ENCODE measurements at regions of chr4 and their contacts with region 1.

Region 1: GRCh38 chr4:118772081-118772766 is 63.7 kb downstream of the SEC24D start:
- DNase-seq: peak; percentile 18
- ATAC-seq: peak; percentile 83
- H3K4me3 ChIP-seq: no peak overlapping the region
- H3K27ac ChIP-seq: no peak overlapping the region
- H3K4me1 ChIP-seq: no peaks in the 10 kb centered on the region
- H3K27me3 ChIP-seq: no peaks in the 10 kb centered on the region
- CTCF ChIP-seq: peak; percentile 55
- EP300 ChIP-seq: no peak
- POLR2A ChIP-seq: no peak
- RAD21 ChIP-seq: no peak

Region 2: GRCh38 chr4:118783887-118784286 is 11.7 kb after region 1 on chr4:
- CTCF ChIA-PET with region 1: no interaction called
- POLR2A ChIA-PET with region 1: no interaction called
- in situ Hi-C with region 1: no loop called
- intact Hi-C with region 1: loop called (anchors 1 kb)
- DNase-seq: no peak
- ATAC-seq: no peak
- H3K4me3 ChIP-seq: no peak overlapping the region
- H3K27ac ChIP-seq: no peak overlapping the region
- H3K4me1 ChIP-seq: no peaks in the 10 kb centered on the region
- H3K27me3 ChIP-seq: no peaks in the 10 kb centered on the region
- CTCF ChIP-seq: no peak
- EP300 ChIP-seq: no peak
- POLR2A ChIP-seq: no peak
- RAD21 ChIP-seq: no peak

Region 3: GRCh38 chr4:118810991-118811764 is 39.0 kb after region 1 on chr4:
- CTCF ChIA-PET with region 1: no interaction called
- POLR2A ChIA-PET with region 1: no interaction called
- in situ Hi-C with region 1: no loop called
- intact Hi-C with region 1: no loop called
- DNase-seq: no peak
- ATAC-seq: no peak
- H3K4me3 ChIP-seq: no peak overlapping the region
- H3K27ac ChIP-seq: no peak overlapping the region
- H3K4me1 ChIP-seq: no peaks in the 10 kb centered on the region
- H3K27me3 ChIP-seq: no peaks in the 10 kb centered on the region
- CTCF ChIP-seq: no peak
- EP300 ChIP-seq: no peak
- POLR2A ChIP-seq: no peak
- RAD21 ChIP-seq: no peak

Region 4: GRCh38 chr4:118865091-118865708 is 93.0 kb after region 1 on chr4:
- CTCF ChIA-PET with region 1: interaction called, 5 read pairs
- POLR2A ChIA-PET with region 1: no interaction called
- in situ Hi-C with region 1: no loop called
- intact Hi-C with region 1: loop called (anchors 2 kb)
- DNase-seq: peak; percentile 56
- ATAC-seq: peak; percentile 100
- H3K4me3 ChIP-seq: no peak overlapping the region
- H3K27ac ChIP-seq: no peak overlapping the region
- H3K4me1 ChIP-seq: no peaks in the 10 kb centered on the region
- H3K27me3 ChIP-seq: peaks cover 0 to 4% of the 10 kb centered on the region in 2 experiments; a peak in 1 of 5 replicates
- CTCF ChIP-seq: peak; percentile 84
- EP300 ChIP-seq: no peak
- POLR2A ChIP-seq: no peak
- RAD21 ChIP-seq: 0 out of 2 replicates have a peak, but pooled peaks have one; percentile 27

Region 5: GRCh38 chr4:118888666-118889311 is 116.6 kb after region 1 on chr4 and contains the start of gene SYNPO2:
- CTCF ChIA-PET with region 1: interaction called, 20 read pairs
- POLR2A ChIA-PET with region 1: no interaction called
- in situ Hi-C with region 1: loop called (anchors 5 kb)
- intact Hi-C with region 1: loop called (anchors 1 kb)
- DNase-seq: no peak
- ATAC-seq: peak; percentile 89
- H3K4me3 ChIP-seq: peak within 1 kb of the TSS in 2 of 3 experiments; percentile 16 to 56; a peak in 2 of 6 replicates
- H3K27ac ChIP-seq: no peak within 1 kb of the TSS
- H3K4me1 ChIP-seq: peaks cover 10% of the 10 kb centered on the region; the same call in 1 of the 2 replicates
- H3K27me3 ChIP-seq: peaks cover 0 to 22% of the 10 kb centered on the region in 2 experiments; a peak in 2 of 5 replicates
- CTCF ChIP-seq: no peak
- EP300 ChIP-seq: no peak
- POLR2A ChIP-seq: no peak
- RAD21 ChIP-seq: no peak
- total RNA-seq, gene SYNPO2: 0.04 TPM in 1 of 2 replicates, not detected in the other

Region 6: GRCh38 chr4:118894034-118894433 is 121.8 kb after region 1 on chr4:
- CTCF ChIA-PET with region 1: interaction called, 20 read pairs
- POLR2A ChIA-PET with region 1: no interaction called
- in situ Hi-C with region 1: loop called (anchors 5 kb)
- intact Hi-C with region 1: loop called (anchors 1 kb)
- DNase-seq: no peak
- ATAC-seq: no peak
- H3K4me3 ChIP-seq: no peak overlapping the region
- H3K27ac ChIP-seq: no peak overlapping the region
- H3K4me1 ChIP-seq: peaks cover 3% of the 10 kb centered on the region; the same call in 1 of the 2 replicates
- H3K27me3 ChIP-seq: peaks cover 2 to 18% of the 10 kb centered on the region in 2 experiments; a peak in 3 of 5 replicates
- CTCF ChIP-seq: no peak
- EP300 ChIP-seq: no peak
- POLR2A ChIP-seq: no peak
- RAD21 ChIP-seq: no peak

Region 7: GRCh38 chr4:118968005-118968404 is 195.8 kb after region 1 on chr4:
- CTCF ChIA-PET with region 1: interaction called, 3 read pairs
- POLR2A ChIA-PET with region 1: no interaction called
- in situ Hi-C with region 1: no loop called
- intact Hi-C with region 1: loop called (anchors 1 kb)
- DNase-seq: no peak
- ATAC-seq: peak; percentile 45
- H3K4me3 ChIP-seq: no peak overlapping the region
- H3K27ac ChIP-seq: no peak overlapping the region
- H3K4me1 ChIP-seq: peaks cover 13% of the 10 kb centered on the region
- H3K27me3 ChIP-seq: no peaks in the 10 kb centered on the region
- CTCF ChIP-seq: no peak
- EP300 ChIP-seq: no peak
- POLR2A ChIP-seq: no peak
- RAD21 ChIP-seq: no peak

Region 8: GRCh38 chr4:119139822-119140252 is 367.6 kb after region 1 on chr4:
- CTCF ChIA-PET with region 1: no interaction called
- POLR2A ChIA-PET with region 1: no interaction called
- in situ Hi-C with region 1: no loop called
- intact Hi-C with region 1: no loop called
- DNase-seq: no peak
- ATAC-seq: peak; percentile 38
- H3K4me3 ChIP-seq: peak overlapping the region in 2 of 3 experiments; percentile 8 to 18; a peak in 2 of 6 replicates
- H3K27ac ChIP-seq: no peak overlapping the region
- H3K4me1 ChIP-seq: peaks cover 26% of the 10 kb centered on the region
- H3K27me3 ChIP-seq: no peaks in the 10 kb centered on the region
- CTCF ChIP-seq: no peak
- EP300 ChIP-seq: no peak
- POLR2A ChIP-seq: no peak
- RAD21 ChIP-seq: no peak